ENCODE measurements at regions of chr19 and their contacts with region 1.

Region 1: DNA sequence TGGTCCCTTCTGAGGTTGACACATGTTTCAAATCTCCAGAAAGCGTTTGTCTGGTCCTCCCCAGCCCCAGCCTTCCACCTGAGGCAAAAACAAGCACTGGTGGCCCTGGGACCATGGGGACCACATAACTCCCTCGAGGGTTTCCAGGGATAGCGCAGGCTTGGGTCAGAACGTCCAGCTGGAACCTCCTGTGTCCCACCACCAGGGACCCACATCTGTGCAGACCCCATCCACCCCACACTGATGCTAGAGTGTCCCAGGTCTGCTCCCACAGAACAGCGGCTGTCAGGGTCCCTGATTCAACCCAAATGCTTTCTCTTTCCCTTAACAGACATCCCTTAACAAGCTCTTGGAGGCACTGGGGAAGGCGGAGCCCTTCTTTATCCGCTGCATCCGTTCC is 29.6 kb upstream of the USE1 start:
- DNase-seq: no peak
- ATAC-seq: no peak
- H3K4me3 ChIP-seq: no peak overlapping the region
- H3K27ac ChIP-seq: no peak overlapping the region
- H3K4me1 ChIP-seq: no peaks in the 10 kb centered on the region
- H3K27me3 ChIP-seq: no peaks in the 10 kb centered on the region

Region 2: DNA sequence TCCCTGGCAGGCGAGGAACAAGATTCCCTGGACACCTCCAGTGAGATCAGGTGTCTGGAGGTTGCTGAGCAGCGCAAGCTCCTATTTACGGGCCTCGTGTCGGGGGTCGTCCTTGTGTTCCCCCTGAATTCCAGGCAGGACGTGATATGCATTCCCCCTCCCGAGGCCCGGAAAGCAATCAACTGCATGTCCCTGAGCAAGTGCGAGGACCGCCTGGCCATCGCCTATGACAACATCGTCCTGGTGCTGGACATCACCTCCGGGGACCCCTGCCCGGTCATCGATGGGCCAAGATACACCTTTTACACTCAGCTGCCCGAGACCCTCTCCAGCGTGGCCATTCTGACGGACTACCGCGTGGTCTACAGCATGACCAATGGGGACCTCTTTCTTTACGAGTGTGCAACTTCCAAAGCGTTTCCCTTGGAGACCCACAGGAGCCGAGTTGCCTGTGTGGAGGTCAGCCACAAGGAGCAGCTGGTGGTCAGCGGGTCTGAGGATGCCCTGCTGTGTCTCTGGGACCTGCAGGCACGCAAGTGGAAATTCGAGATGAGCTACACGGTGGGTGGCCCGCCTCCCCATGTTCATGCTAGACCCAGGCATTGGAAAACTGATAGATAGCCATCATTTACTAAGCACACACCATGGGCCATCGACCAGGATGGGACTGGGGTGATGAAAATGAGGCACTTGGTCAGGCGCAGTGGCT is 377.9 kb before region 1 on chr19:
- intact Hi-C with region 1: loop called in 1 of 4 experiments (anchors 5 kb)
- DNase-seq: no peak
- ATAC-seq: no peak
- H3K4me3 ChIP-seq: no peak overlapping the region
- H3K27ac ChIP-seq: no peak overlapping the region
- H3K4me1 ChIP-seq: no peaks in the 10 kb centered on the region
- H3K27me3 ChIP-seq: no peaks in the 10 kb centered on the region

Region 3: DNA sequence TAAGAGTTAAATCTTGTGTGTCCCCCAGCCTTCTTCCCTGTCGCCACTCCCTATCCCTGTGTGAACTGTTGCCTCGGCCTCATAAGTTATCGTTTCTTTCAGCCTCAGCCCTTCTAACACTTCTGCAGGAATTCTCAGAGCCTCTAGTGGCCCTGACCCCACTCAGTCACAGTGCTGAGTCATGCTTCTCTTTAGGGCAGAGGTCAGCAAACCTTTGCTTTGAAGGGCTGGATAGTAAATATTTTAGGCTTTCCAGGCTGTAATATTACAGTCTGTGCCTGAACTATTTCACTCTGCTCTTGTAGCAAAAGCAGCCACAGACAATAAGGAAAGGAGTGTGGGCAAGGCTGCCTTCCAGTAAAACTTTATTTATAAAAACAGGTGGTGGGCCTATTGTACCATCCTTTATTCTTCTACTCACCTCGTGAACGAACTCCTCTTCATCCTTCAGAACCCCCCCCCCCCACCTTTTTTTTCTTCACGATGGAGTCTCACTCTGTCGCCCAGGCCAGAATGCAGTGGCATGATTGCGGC is 87.9 kb before region 1 on chr19:
- intact Hi-C with region 1: no loop called
- DNase-seq: no peak
- ATAC-seq: peak; percentile 47 to 62
- H3K4me3 ChIP-seq: no peak overlapping the region
- H3K27ac ChIP-seq: peak overlapping the region; percentile 48
- H3K4me1 ChIP-seq: peaks cover 2% of the 10 kb centered on the region
- H3K27me3 ChIP-seq: no peaks in the 10 kb centered on the region

Measured in right cardiac atrium (tissue), 5 donors.